Activated CD4-positive, alpha-beta memory T cell treated with anti-CD3 and anti-CD28 coated beads, Interleukin-2, amount 10 ng/mL, durations not matched to agents 7 days and 5 days (primary cell): ENCODE measurements at regions of chr17 and their contacts with region 1.

Region 1: DNA sequence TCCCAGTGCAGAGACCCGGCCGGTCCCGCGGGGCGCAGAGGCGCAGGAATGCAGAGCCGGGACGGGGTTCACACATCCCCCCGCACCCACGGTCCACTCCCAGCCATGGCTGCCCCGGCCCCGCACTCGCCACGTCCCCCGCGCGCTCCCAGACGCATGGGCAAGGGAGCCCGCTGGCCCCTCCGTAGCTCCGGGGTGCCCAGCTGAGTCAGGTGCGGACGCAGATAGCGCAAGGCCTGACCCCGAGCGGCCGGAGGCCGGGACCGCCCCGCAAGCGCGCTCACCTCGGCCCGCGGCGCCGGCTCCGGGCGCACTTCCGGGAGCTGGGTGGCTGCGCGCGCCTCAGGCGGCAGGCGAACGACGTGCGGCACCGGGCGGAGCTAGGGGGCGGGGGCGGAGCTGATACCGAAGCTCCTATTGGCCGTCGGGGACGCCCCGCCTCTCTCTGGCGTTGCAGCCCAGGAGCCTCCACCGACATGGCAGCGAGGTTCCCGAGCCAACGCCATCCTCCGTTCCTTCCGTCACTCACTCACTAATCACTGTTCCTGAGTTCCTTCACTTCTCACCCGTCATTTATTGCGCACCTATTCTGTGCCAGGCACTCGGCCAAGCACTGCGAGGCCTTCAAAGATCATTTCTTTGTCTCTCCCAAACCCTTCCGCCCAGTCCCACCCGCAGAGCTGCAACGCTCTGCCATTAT is at the start of gene ZNF18:
- DNase-seq: peak; percentile 95
- H3K4me3 Mint-ChIP-seq: peak within 1 kb of the TSS; percentile 85
- H3K27ac Mint-ChIP-seq: peak within 1 kb of the TSS; percentile 86
- H3K4me1 Mint-ChIP-seq: peaks cover 18% of the 10 kb centered on the region
- H3K27me3 Mint-ChIP-seq: no peaks in the 10 kb centered on the region
- total RNA-seq, gene ZNF18: 9.7 to 12.6 TPM

Region 2: DNA sequence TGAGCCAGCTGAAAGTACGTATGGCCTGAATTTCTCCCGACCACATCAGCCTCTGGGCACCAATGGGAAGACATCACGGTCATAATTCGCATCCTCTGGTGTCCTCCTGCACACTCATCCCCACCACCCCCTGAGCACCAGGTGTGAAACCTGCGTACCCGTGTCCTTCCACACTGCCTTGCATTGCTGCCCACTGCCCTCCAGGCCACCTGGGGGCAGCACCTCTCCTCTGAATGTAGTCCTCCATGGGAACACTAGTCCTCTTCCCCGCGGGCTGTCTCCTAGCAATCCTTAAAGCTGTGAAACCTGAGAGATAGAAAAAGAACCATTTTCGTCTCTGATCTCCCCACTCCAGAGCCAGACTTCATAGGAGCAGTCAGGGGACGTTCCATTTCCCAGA is 125.5 kb before region 1 on chr17:
- CTCF ChIA-PET with region 1: no interaction called
- POLR2A ChIA-PET with region 1: no interaction called
- DNase-seq: no peak
- H3K4me3 Mint-ChIP-seq: no peak overlapping the region
- H3K27ac Mint-ChIP-seq: no peak overlapping the region
- H3K4me1 Mint-ChIP-seq: no peaks in the 10 kb centered on the region
- H3K27me3 Mint-ChIP-seq: no peaks in the 10 kb centered on the region

Region 3: DNA sequence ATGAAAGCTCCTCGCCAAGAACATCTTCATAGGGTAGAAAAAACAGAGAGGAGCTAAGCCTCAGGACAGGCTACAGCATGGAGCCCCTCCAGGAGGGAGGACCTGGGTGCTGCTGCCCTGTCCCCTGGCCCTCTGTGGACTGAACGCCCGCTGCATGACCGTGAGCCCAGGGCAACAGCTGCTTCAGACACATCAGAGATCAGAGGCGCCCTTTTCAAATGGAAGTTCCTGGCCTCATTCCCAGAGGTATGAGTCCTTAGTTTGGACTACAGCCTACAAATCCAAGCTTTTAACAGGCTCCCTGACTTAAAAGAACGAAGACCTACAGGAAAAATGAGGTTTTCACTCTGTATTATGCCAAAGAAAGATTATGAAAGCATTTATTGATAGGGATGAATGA is 48.5 kb before region 1 on chr17:
- CTCF ChIA-PET with region 1: no interaction called
- POLR2A ChIA-PET with region 1: no interaction called
- DNase-seq: no peak
- H3K4me3 Mint-ChIP-seq: no peak overlapping the region
- H3K27ac Mint-ChIP-seq: no peak overlapping the region
- H3K4me1 Mint-ChIP-seq: no peaks in the 10 kb centered on the region
- H3K27me3 Mint-ChIP-seq: no peaks in the 10 kb centered on the region

Region 4: GRCh38 chr17:11986942-11987329 is 10.4 kb before region 1 on chr17:
- CTCF ChIA-PET with region 1: interaction called, 3 read pairs
- POLR2A ChIA-PET with region 1: interaction called, 22 read pairs
- DNase-seq: no peak
- H3K4me3 Mint-ChIP-seq: no peak overlapping the region
- H3K27ac Mint-ChIP-seq: no peak overlapping the region
- H3K4me1 Mint-ChIP-seq: peaks cover 2% of the 10 kb centered on the region
- H3K27me3 Mint-ChIP-seq: no peaks in the 10 kb centered on the region

Region 5: DNA sequence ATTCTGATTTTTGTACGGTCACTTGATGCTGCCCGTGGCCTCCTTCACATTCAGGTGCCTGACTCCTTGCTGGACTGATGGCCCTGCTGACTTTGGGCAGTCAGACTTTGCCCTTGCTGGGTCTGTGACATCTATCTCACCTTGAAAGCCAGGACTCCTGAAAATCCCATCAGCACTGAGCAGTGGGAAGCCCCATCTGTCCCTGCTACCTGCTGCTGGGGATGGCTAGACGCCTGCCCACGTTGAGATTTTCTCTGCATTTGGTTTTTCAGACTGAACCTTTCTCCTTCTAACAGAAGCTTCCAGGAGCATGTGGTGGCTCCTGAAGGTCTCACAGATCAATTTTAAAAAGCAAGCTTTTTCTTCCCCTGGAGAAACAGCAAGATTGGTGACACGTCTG is 10.2 kb after region 1 on chr17:
- CTCF ChIA-PET with region 1: interaction called, 3 read pairs
- POLR2A ChIA-PET with region 1: interaction called, 25 read pairs
- DNase-seq: no peak
- H3K4me3 Mint-ChIP-seq: no peak overlapping the region
- H3K27ac Mint-ChIP-seq: no peak overlapping the region
- H3K4me1 Mint-ChIP-seq: peaks cover 3% of the 10 kb centered on the region
- H3K27me3 Mint-ChIP-seq: peaks cover 9% of the 10 kb centered on the region

Region 6: DNA sequence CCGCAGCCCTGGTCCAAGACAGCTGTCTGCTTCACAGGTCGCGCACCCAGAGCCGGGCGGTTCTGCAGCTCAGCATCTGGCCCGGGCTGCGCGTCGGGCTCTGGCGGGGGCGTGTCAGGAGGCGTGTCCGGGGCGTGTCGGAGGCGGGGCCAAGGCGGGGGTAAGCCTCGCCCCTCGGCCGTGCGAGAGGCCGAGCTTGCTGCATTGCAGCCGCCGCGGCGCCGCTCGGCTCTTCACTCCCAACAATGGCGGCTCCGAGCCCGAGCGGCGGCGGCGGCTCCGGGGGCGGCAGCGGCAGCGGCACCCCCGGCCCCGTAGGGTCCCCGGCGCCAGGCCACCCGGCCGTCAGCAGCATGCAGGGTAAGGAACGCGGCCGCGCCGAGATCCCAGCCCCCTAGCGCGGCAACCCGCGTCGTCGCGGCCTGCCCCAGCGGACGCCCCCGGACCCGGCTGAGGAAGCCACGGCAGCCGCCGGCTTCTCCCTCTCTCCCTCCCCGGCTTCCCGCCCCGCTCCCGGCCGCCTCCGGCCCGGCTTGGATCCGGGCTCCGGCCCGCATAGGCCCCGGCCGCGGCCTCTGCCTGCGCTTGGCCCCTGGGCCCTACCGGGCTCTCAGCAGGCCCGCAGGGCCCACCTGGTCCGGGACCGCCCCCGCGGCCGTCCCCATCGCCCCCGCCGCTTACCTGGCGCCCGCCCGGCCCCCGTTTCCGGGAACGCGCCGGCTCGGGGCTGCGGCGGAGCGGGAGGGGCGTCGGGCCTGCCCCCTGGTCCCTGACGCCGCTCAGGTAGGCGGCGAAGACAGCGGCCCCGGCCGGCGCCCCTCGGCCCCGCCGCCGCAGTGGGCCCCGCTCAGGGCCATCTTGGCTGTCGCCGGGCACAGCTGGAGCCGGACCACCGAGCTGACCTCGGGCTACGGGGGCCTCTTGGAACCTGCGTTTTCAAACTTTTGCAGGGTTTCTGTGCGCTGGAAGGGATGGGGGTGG is 23.6 kb after region 1 on chr17 and contains the start of gene MAP2K4:
- CTCF ChIA-PET with region 1: interaction called, 32 read pairs
- POLR2A ChIA-PET with region 1: interaction called, 208 read pairs
- DNase-seq: peak; percentile 93
- H3K4me3 Mint-ChIP-seq: peak within 1 kb of the TSS; percentile 73
- H3K27ac Mint-ChIP-seq: peak within 1 kb of the TSS; percentile 44
- H3K4me1 Mint-ChIP-seq: peaks cover 27% of the 10 kb centered on the region
- H3K27me3 Mint-ChIP-seq: peaks cover 8% of the 10 kb centered on the region
- total RNA-seq, gene MAP2K4: 30.2 to 30.3 TPM

Region 7: DNA sequence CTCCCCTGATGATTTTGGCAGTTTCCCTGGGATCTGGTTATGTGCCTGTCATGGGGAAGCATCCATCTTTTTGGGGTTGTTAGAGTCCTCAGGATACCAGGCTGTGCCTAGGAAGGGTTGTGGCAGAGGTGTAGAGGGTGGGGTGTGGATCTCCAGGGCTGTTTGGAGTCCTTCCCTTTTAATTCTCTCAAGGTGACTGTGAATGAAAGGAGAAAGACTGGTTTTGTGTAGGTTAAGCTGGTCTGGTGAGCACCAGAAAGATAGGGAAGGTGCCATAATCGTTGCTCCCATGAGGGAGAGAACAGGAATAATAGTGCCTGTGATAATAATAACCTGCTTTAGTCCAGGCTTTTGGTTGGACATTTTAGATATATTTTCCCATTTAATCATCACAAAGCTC is 30.4 kb after region 1 on chr17:
- CTCF ChIA-PET with region 1: interaction called, 32 read pairs
- POLR2A ChIA-PET with region 1: interaction called, 208 read pairs
- DNase-seq: no peak
- H3K4me3 Mint-ChIP-seq: no peak overlapping the region
- H3K27ac Mint-ChIP-seq: no peak overlapping the region
- H3K4me1 Mint-ChIP-seq: peaks cover 10% of the 10 kb centered on the region
- H3K27me3 Mint-ChIP-seq: no peaks in the 10 kb centered on the region

Region 8: DNA sequence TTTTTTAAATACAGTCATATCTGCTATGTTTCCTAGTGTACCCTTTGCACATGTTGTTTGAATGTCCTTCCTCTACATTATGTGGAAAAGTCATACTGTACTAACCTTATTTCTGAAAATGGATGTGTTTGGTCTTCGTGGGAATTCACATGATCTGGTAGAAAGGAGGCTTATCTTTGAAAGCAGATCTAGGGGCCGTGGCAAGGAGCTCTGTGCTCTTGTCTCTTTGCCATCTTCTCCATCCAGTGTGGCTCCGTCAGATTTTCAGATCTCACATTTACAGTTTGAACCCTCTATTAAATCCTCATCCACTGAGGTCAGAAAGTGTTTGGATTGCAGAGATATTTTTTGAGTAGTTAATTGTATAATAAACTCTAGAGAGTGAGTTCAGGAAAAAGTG is 56.3 kb after region 1 on chr17:
- CTCF ChIA-PET with region 1: interaction called, 3 read pairs
- POLR2A ChIA-PET with region 1: interaction called, 54 read pairs
- DNase-seq: no peak
- H3K4me3 Mint-ChIP-seq: peak overlapping the region; percentile 64
- H3K27ac Mint-ChIP-seq: peak overlapping the region; percentile 77
- H3K4me1 Mint-ChIP-seq: peaks cover 57% of the 10 kb centered on the region
- H3K27me3 Mint-ChIP-seq: no peaks in the 10 kb centered on the region

Region 9: GRCh38 chr17:13017659-13018459 is 1020.6 kb after region 1 on chr17 and contains the start of gene ELAC2:
- CTCF ChIA-PET with region 1: interaction called, 6 read pairs
- POLR2A ChIA-PET with region 1: interaction called, 47 read pairs
- DNase-seq: peak; percentile 96
- H3K4me3 Mint-ChIP-seq: peak within 1 kb of the TSS; percentile 96
- H3K27ac Mint-ChIP-seq: peak within 1 kb of the TSS; percentile 89
- H3K4me1 Mint-ChIP-seq: peaks cover 32% of the 10 kb centered on the region
- H3K27me3 Mint-ChIP-seq: no peaks in the 10 kb centered on the region
- total RNA-seq, gene ELAC2: 50.8 to 54.0 TPM